Activated naive CD4-positive, alpha-beta T cell treated with anti-CD3 and anti-CD28 coated beads for 36 hours (primary cell): ENCODE measurements at regions of chr4 and their contacts with region 1.

Region 1: DNA sequence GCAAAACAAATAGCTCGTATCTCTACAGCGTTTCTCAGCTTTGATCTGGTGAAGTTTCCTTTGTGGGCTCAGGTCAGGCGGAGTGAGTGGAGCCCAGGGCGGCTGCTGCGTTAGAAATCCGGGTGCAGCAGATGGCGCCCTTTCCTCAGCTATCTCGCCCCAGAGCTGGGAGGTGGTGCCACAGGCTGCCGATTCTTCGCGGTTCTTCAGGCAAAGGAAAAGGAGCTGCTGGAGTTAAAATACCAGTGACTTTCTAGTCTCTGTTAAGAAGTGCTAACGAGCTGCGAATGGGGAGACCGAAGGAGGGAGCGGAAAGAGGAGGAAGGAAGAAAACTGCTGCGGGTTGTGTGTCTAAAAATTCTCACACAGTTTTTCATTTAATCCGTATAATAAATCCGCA is 114.6 kb downstream of the CPE start:
- DNase-seq: peak; percentile 84
- H3K4me3 Mint-ChIP-seq: peak overlapping the region; percentile 56
- H3K27ac Mint-ChIP-seq: no peak overlapping the region
- H3K4me1 Mint-ChIP-seq: peaks cover 7% of the 10 kb centered on the region
- H3K27me3 Mint-ChIP-seq: peaks cover 12% of the 10 kb centered on the region

Region 2: GRCh38 chr4:165118256-165118909 is 375.0 kb before region 1 on chr4:
- CTCF ChIA-PET with region 1: no interaction called
- intact Hi-C with region 1: no loop called
- DNase-seq: no peak
- H3K4me3 Mint-ChIP-seq: no peak overlapping the region
- H3K27ac Mint-ChIP-seq: no peak overlapping the region
- H3K4me1 Mint-ChIP-seq: peaks cover 7% of the 10 kb centered on the region
- H3K27me3 Mint-ChIP-seq: peaks cover 2% of the 10 kb centered on the region

Region 3: DNA sequence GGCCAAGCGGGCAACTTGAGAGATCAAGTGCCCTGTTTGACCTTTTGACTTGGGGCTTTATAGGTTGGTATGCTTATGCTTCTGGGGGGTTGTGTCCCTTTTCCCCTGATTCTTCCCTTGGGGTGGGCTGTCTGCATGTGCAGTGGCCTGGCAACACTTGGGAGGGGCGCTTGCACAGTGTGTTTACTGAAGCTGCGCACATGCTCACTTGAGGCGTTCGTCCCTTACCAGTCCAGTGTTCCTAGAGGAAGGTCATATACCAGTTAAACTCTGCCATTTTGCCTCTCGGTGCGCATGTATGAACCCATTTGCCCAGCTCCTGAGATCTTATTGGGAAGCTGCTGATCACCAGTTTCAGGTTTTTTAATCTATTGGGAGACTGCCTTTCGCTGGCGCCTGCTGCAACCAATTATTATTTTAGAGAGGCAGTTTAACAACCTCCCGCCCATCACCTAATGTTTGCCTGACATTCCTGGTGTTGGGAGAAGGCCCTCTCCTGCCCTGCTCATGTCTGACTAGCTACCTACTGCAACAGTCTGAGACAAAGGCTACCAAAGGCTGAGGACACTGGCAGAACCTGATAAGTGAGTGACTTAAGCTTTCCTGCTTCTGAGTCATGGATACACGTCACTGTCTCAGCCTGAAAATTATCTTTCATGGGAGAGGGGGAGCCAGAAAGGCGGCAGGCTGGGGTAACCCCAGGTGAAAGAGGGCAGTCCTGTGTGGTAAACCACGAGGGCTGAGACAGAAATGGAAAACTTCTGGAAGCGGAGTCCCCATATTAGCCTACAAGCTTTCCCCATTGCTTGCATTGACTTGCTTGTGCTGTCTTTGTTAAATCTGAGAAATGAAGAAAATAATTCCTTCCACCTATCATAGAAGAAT is 16.9 kb before region 1 on chr4:
- CTCF ChIA-PET with region 1: interaction called, 6 read pairs
- intact Hi-C with region 1: loop called (anchors 1 kb)
- DNase-seq: no peak
- H3K4me3 Mint-ChIP-seq: no peak overlapping the region
- H3K27ac Mint-ChIP-seq: no peak overlapping the region
- H3K4me1 Mint-ChIP-seq: no peaks in the 10 kb centered on the region
- H3K27me3 Mint-ChIP-seq: peaks cover 11% of the 10 kb centered on the region

Region 4: GRCh38 chr4:165537028-165537648 is 43.8 kb after region 1 on chr4:
- CTCF ChIA-PET with region 1: interaction called, 21 read pairs
- intact Hi-C with region 1: loop called (anchors 1 kb)
- DNase-seq: no peak
- H3K4me3 Mint-ChIP-seq: no peak overlapping the region
- H3K27ac Mint-ChIP-seq: no peak overlapping the region
- H3K4me1 Mint-ChIP-seq: no peaks in the 10 kb centered on the region
- H3K27me3 Mint-ChIP-seq: peaks cover 6% of the 10 kb centered on the region

Region 5: GRCh38 chr4:165553221-165553810 is 60.0 kb after region 1 on chr4:
- CTCF ChIA-PET with region 1: no interaction called
- intact Hi-C with region 1: no loop called
- DNase-seq: no peak
- H3K4me3 Mint-ChIP-seq: no peak overlapping the region
- H3K27ac Mint-ChIP-seq: no peak overlapping the region
- H3K4me1 Mint-ChIP-seq: no peaks in the 10 kb centered on the region
- H3K27me3 Mint-ChIP-seq: no peaks in the 10 kb centered on the region

Region 6: DNA sequence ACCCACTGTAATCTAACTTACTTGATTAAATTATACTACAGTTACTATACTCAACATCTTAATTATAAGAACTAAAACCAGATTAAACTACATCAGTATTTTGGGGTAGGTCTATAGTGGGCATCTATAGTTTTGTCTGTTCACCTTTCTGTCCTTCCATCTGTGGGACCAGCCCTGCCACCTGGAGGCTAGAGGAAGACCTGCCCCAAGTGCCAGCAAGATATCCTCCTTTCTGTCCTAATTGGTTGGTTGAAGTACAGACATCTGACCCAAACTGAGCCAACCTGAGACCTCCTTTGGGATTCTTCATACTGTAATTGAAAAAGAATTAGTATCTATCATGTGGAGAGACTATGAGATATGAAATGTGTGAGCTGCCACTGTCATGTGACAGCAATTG is 207.5 kb after region 1 on chr4:
- CTCF ChIA-PET with region 1: no interaction called
- intact Hi-C with region 1: loop called (anchors 5 kb)
- DNase-seq: peak; percentile 13
- H3K4me3 Mint-ChIP-seq: no peak overlapping the region
- H3K27ac Mint-ChIP-seq: no peak overlapping the region
- H3K4me1 Mint-ChIP-seq: no peaks in the 10 kb centered on the region
- H3K27me3 Mint-ChIP-seq: no peaks in the 10 kb centered on the region

Region 7: DNA sequence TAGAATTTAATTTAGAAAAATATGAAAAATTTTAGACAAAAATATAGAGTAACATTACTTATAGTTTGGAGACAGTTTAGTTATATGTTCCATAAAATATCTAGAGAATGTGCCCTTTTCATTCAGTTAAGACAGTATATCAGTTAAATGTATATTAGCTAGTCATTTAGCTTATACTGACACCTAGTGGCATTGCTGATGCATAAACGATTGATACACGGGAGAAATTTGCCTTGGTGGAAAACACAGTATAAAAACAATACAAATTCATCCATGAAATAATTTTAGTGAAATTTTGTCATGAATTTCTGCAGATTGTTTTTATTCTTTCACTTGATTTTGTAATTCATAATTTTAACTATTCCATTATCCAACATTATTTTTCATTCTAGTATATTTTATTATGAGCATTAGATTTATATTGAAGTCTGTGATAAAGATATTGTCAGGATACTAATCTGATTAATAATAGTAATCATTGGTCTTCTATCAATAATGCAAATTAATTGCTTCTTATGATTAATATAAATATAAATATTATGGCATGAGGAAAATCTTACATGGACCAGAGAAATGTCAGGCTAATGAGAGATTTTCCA is 598.7 kb after region 1 on chr4:
- CTCF ChIA-PET with region 1: interaction called, 18 read pairs
- intact Hi-C with region 1: loop called (anchors 1 kb)
- DNase-seq: no peak
- H3K4me3 Mint-ChIP-seq: no peak overlapping the region
- H3K27ac Mint-ChIP-seq: no peak overlapping the region
- H3K4me1 Mint-ChIP-seq: no peaks in the 10 kb centered on the region
- H3K27me3 Mint-ChIP-seq: peaks cover 2% of the 10 kb centered on the region

Region 8: GRCh38 chr4:166252487-166253402 is 759.4 kb after region 1 on chr4:
- CTCF ChIA-PET with region 1: no interaction called
- intact Hi-C with region 1: loop called (anchors 5 kb)
- DNase-seq: peak; percentile 10
- H3K4me3 Mint-ChIP-seq: no peak overlapping the region
- H3K27ac Mint-ChIP-seq: no peak overlapping the region
- H3K4me1 Mint-ChIP-seq: no peaks in the 10 kb centered on the region
- H3K27me3 Mint-ChIP-seq: no peaks in the 10 kb centered on the region